A673 (cell line): ENCODE measurements at regions of chr1 and their contacts with region 1.

Region 1: GRCh38 chr1:246497331-246497915 is 9.7 kb downstream of the SMYD3 start:
- DNase-seq: peak; percentile 84
- H3K4me3 ChIP-seq: no peak overlapping the region
- H3K27ac ChIP-seq: no peak overlapping the region
- H3K4me1 ChIP-seq: no peaks in the 10 kb centered on the region
- H3K27me3 ChIP-seq: no peaks in the 10 kb centered on the region
- CTCF ChIP-seq: peak; percentile 85

Region 2: GRCh38 chr1:246753670-246754535 is 256.5 kb after region 1 on chr1:
- CTCF ChIA-PET with region 1: no interaction called
- POLR2A ChIA-PET with region 1: no interaction called
- intact Hi-C with region 1: loop called (anchors 1 kb)
- DNase-seq: peak; percentile 74
- H3K4me3 ChIP-seq: no peak overlapping the region
- H3K27ac ChIP-seq: no peak overlapping the region
- H3K4me1 ChIP-seq: peaks cover 3% of the 10 kb centered on the region
- H3K27me3 ChIP-seq: no peaks in the 10 kb centered on the region
- CTCF ChIP-seq: peak; percentile 81